MCF 10A (cell line): ENCODE measurements at regions of chr19 and their contacts with region 1.

Region 1: GRCh38 chr19:4909897-4910593 is 744 bp downstream of the UHRF1 start:
- DNase-seq: peak; percentile 95
- H3K4me3 Mint-ChIP-seq: peak overlapping the region; percentile 65
- H3K27ac Mint-ChIP-seq: peak overlapping the region; percentile 85
- H3K4me1 Mint-ChIP-seq: peaks cover 25% of the 10 kb centered on the region
- H3K27me3 Mint-ChIP-seq: no peaks in the 10 kb centered on the region
- CTCF ChIP-seq: no peak

Region 2: DNA sequence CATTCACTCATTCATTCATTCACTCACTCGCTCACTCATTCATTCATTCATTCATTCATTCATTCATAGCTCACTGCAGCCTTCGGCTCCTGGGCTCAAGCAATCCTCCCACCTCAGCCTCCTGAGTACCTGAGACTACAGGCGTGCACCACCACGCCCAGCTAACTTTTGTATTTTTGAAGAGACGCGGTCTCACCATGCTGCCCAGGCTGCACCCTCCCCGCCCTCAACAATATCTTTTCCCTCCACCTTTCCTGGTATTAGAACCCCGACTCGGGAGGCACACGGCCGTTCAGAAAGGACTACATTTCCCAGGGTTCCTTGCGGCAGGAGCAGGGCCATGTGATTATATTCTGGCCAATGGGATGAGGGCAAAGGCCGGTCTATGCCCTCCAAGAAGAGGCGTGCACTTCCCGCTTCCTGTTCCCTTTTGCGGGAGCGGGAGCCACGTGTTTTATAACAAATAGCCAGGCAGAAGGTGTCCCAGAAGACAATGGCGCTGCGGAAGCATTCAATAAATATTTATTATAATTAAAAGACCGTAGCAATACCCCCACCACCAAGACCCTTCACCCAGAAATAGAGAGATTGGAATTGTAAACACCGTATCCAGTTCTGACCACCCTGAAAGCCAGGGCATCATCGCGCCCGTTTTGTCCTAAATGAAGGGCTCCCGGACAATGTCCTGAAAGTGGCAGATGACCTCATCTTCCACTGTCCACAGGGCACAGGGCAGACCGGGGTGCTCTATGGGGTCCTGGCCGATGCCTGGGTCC is 94.4 kb before region 1 on chr19:
- CTCF ChIA-PET with region 1: interaction called, 86 read pairs
- POLR2A ChIA-PET with region 1: interaction called, 50 read pairs
- intact Hi-C with region 1: loop called (anchors 1 kb)
- DNase-seq: peak; percentile 95
- H3K4me3 Mint-ChIP-seq: peak overlapping the region; percentile 29
- H3K27ac Mint-ChIP-seq: no peak overlapping the region
- H3K4me1 Mint-ChIP-seq: peaks cover 31% of the 10 kb centered on the region
- H3K27me3 Mint-ChIP-seq: no peaks in the 10 kb centered on the region
- CTCF ChIP-seq: no peak

Region 3: GRCh38 chr19:4867534-4868285 is 42.3 kb before region 1 on chr19 and contains the start of gene PLIN3:
- CTCF ChIA-PET with region 1: interaction called, 93 read pairs
- POLR2A ChIA-PET with region 1: interaction called, 98 read pairs
- intact Hi-C with region 1: loop called (anchors 1 kb)
- DNase-seq: peak; percentile 97
- H3K4me3 Mint-ChIP-seq: peak within 1 kb of the TSS; percentile 80
- H3K27ac Mint-ChIP-seq: peak within 1 kb of the TSS; percentile 90
- H3K4me1 Mint-ChIP-seq: peaks cover 10% of the 10 kb centered on the region
- H3K27me3 Mint-ChIP-seq: no peaks in the 10 kb centered on the region
- CTCF ChIP-seq: no peak
- total RNA-seq, gene PLIN3: 64.3 and 71.7 TPM in 2 replicates

Region 4: GRCh38 chr19:4968462-4969291 is 58.6 kb after region 1 on chr19 and contains the start of gene KDM4B:
- CTCF ChIA-PET with region 1: interaction called, 4 read pairs
- POLR2A ChIA-PET with region 1: interaction called, 85 read pairs
- intact Hi-C with region 1: loop called (anchors 5 kb)
- DNase-seq: peak; percentile 99
- H3K4me3 Mint-ChIP-seq: peak within 1 kb of the TSS; percentile 83
- H3K27ac Mint-ChIP-seq: peak within 1 kb of the TSS; percentile 93
- H3K4me1 Mint-ChIP-seq: peaks cover 38% of the 10 kb centered on the region
- H3K27me3 Mint-ChIP-seq: no peaks in the 10 kb centered on the region
- CTCF ChIP-seq: no peak
- total RNA-seq, gene KDM4B: 34.4 and 36.3 TPM in 2 replicates

Region 5: DNA sequence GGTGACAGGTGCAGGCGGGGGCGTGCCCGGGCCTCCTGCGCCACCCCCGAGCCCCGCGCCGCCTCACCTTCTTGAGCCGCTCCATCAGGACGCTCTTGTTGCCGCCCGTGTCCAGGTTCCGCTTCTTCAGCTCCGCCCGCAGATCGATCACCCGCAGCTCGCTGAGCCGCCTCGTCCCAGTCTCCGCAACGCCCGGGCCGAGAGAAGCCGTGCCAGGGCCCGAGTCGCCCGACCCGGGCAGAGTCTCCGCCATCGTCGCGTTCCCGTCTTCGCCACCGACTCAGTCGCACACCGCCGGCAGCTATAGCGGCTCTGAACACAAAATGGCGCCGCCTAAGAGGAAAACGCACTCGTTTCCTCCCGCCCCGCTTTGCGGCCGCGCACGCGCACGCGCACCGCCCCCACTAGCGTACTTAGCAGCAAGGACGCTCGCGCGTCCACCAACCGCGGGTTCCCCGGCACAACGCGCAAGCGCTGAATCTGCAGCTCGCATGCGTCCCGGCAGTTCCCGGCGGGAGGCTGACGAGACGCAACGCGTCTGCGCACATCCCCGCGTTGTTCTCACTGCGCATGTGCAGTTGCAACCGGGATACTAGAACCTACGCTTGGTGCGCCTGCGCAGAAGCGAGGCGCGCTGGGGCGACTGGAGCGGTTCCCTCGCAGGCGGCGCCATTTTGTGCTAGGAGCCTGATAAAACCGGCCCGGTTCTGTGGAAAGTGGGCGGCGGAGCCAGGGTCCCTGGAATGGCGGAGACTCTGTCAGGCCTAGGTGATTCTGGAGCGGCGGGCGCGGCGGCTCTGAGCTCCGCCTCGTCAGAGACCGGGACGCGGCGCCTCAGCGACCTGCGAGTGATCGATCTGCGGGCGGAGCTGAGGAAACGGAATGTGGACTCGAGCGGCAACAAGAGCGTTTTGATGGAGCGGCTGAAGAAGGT is 712.7 kb after region 1 on chr19 and contains the starts of genes SAFB and SAFB2:
- CTCF ChIA-PET with region 1: no interaction called
- POLR2A ChIA-PET with region 1: interaction called, 11 read pairs
- intact Hi-C with region 1: no loop called
- DNase-seq: peak; percentile 100
- H3K4me3 Mint-ChIP-seq: peak within 1 kb of the TSS; percentile 100
- H3K27ac Mint-ChIP-seq: peak within 1 kb of the TSS; percentile 100
- H3K4me1 Mint-ChIP-seq: peaks cover 41% of the 10 kb centered on the region
- H3K27me3 Mint-ChIP-seq: no peaks in the 10 kb centered on the region
- CTCF ChIP-seq: no peak
- total RNA-seq, gene SAFB: 135 and 137 TPM in 2 replicates
- total RNA-seq, gene SAFB2: 98.6 and 118 TPM in 2 replicates